ENCODE measurements at regions of chr4 and their contacts with region 1.

Region 1: GRCh38 chr4:178856139-178856800 is 1414.0 kb upstream of the AGA start:
- DNase-seq: no peak
- ATAC-seq: no peak
- H3K4me3 ChIP-seq: no peak overlapping the region
- H3K27ac ChIP-seq: no peak overlapping the region
- H3K4me1 ChIP-seq: no peaks in the 10 kb centered on the region
- H3K27me3 ChIP-seq: no peaks in the 10 kb centered on the region
- CTCF ChIP-seq: no peak
- EP300 ChIP-seq: no peak
- POLR2A ChIP-seq: no peak
- RAD21 ChIP-seq: no peak

Region 2: GRCh38 chr4:178136736-178137345 is 719.4 kb before region 1 on chr4:
- CTCF ChIA-PET with region 1: no interaction called
- POLR2A ChIA-PET with region 1: no interaction called
- in situ Hi-C with region 1: no loop called
- intact Hi-C with region 1: no loop called
- DNase-seq: no peak
- ATAC-seq: no peak
- H3K4me3 ChIP-seq: no peak overlapping the region
- H3K27ac ChIP-seq: no peak overlapping the region
- H3K4me1 ChIP-seq: no peaks in the 10 kb centered on the region
- H3K27me3 ChIP-seq: no peaks in the 10 kb centered on the region; a peak in 1 of 5 replicates
- CTCF ChIP-seq: no peak
- EP300 ChIP-seq: no peak
- POLR2A ChIP-seq: no peak
- RAD21 ChIP-seq: no peak

Region 3: DNA sequence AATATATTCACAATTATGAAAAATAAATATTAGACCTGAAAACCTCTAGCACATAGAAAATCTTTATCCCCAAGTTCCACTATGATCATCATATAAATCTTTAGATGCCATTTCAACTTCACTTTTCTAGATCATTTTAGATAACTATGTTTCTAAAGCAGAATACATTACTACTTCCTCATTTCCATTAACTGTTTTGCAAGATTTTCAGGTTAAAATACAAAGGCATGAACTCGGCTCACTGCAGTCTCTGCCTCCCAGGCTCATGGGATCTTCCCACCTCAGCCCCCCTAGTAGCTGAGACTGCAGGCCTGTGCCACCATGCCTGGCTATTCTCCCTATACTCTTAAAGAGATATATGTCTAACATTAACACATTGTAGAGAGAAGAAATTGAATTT is 48.2 kb before region 1 on chr4:
- CTCF ChIA-PET with region 1: no interaction called
- POLR2A ChIA-PET with region 1: no interaction called
- in situ Hi-C with region 1: no loop called
- intact Hi-C with region 1: loop called (anchors 2 kb)
- DNase-seq: no peak
- ATAC-seq: no peak
- H3K4me3 ChIP-seq: no peak overlapping the region
- H3K27ac ChIP-seq: no peak overlapping the region
- H3K4me1 ChIP-seq: no peaks in the 10 kb centered on the region
- H3K27me3 ChIP-seq: no peaks in the 10 kb centered on the region; a peak in 1 of 5 replicates
- CTCF ChIP-seq: no peak
- EP300 ChIP-seq: no peak
- POLR2A ChIP-seq: no peak
- RAD21 ChIP-seq: no peak